ENCODE measurements at regions of chr1 and their contacts with region 1.

Region 1: GRCh38 chr1:151198255-151199127 is at the start of gene PIP5K1A:
- DNase-seq: peak; percentile 88 to 95
- H3K4me3 ChIP-seq: peak within 1 kb of the TSS; percentile 85
- H3K27ac ChIP-seq: peak within 1 kb of the TSS; percentile 93
- H3K4me1 ChIP-seq: peaks cover 38% of the 10 kb centered on the region
- H3K27me3 ChIP-seq: no peaks in the 10 kb centered on the region
- CTCF ChIP-seq: no peak
- total RNA-seq, gene PIP5K1A: 69.7 and 76.4 TPM in 2 replicates

Region 2: DNA sequence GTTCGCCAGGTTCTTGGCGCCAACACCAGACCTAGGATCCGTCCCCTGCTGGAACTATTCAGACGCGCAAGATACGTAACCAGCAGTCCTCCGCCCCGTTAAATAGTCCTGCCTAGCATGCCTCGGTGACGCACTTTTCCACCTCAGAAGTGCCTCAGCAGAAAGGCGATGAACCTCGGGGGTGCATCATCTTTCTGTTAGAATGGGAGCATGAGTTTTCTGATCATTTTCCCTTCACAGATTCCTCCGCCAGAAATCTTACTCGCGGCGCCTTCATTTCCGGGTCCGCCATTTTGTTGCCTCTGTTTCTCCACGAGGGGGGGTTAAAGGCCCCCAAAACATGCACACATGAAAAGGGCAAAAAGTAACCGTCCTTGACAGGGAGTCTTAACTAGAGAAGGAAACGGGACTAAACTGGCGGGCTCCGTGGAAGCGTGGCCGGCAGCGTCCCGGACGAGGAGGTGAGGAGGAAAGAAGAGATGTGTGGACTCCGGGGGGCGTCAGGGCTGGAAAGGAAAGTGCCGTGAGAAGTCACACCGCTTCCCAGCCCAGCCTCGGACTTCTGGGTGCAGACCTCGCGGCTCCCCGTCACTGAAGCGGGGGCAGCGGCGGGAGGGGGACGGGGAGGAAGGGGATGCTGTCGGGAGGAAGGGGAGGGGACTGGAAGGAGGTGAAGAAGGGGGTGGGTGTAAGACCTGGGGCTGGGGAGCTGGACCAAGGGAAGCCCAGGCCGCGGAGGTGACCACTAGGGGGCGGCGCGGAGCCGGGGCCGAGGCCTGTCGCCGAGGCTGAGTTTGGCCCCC is 127.8 kb before region 1 on chr1 and contains the start of gene GABPB2:
- CTCF ChIA-PET with region 1: interaction called, 10 read pairs
- POLR2A ChIA-PET with region 1: no interaction called
- intact Hi-C with region 1: no loop called
- DNase-seq: peak; percentile 78 to 85
- H3K4me3 ChIP-seq: peak within 1 kb of the TSS; percentile 84
- H3K27ac ChIP-seq: peak within 1 kb of the TSS; percentile 89
- H3K4me1 ChIP-seq: peaks cover 17% of the 10 kb centered on the region
- H3K27me3 ChIP-seq: no peaks in the 10 kb centered on the region
- CTCF ChIP-seq: peak; percentile 87
- total RNA-seq, gene GABPB2: 6.4 and 6.6 TPM in 2 replicates

Region 3: GRCh38 chr1:151281969-151282882 is 83.7 kb after region 1 on chr1 and contains the start of gene ZNF687:
- CTCF ChIA-PET with region 1: no interaction called
- POLR2A ChIA-PET with region 1: interaction called, 19 read pairs
- intact Hi-C with region 1: loop called (anchors 1 kb)
- DNase-seq: peak; percentile 99 to 100
- H3K4me3 ChIP-seq: peak within 1 kb of the TSS; percentile 62
- H3K27ac ChIP-seq: peak within 1 kb of the TSS; percentile 90
- H3K4me1 ChIP-seq: peaks cover 13% of the 10 kb centered on the region; the same call in 1 of the 2 replicates
- H3K27me3 ChIP-seq: no peaks in the 10 kb centered on the region
- CTCF ChIP-seq: no peak
- total RNA-seq, gene ZNF687: 26.6 and 28.7 TPM in 2 replicates

Region 4: DNA sequence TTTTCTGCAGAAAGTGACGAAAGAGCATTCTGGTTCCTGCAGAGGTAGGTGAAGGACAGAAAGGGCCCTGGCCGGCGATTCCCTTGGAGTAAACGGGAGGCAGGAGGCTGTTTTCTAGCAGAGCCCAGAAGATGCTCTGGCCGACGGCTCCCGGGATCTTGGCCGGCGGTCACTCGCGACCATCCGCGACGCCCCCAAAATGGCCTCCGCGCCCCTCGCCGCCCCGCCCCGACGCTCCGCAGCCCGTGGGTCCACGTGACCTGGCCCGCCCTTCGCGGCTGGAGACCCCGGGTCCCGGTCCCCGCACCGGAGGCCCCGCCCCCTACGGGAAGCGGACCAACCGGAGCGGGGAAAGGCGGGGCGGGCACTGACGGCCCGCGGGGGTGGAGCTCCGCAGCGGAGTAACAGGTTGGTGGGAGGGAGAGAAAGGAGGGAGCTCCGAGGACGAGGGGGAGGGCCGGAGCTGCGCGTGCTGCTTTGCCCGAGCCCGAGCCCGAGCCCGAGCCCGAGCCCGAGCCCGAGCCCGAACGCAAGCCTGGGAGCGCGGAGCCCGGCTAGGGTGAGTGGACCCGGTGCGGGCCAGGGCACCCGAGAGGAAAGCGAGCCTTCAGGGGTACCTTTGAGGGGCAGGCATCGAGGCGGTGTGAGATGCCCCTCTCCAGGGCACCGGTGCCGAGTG is 312.6 kb after region 1 on chr1 and contains the start of gene CGN:
- CTCF ChIA-PET with region 1: no interaction called
- POLR2A ChIA-PET with region 1: no interaction called
- intact Hi-C with region 1: loop called (anchors 5 kb)
- DNase-seq: peak; percentile 75 to 89
- H3K4me3 ChIP-seq: peak within 1 kb of the TSS; percentile 62
- H3K27ac ChIP-seq: peak within 1 kb of the TSS; percentile 96
- H3K4me1 ChIP-seq: peaks cover 57% of the 10 kb centered on the region
- H3K27me3 ChIP-seq: no peaks in the 10 kb centered on the region
- CTCF ChIP-seq: no peak
- total RNA-seq, gene CGN: 30.3 and 31.1 TPM in 2 replicates

Region 5: DNA sequence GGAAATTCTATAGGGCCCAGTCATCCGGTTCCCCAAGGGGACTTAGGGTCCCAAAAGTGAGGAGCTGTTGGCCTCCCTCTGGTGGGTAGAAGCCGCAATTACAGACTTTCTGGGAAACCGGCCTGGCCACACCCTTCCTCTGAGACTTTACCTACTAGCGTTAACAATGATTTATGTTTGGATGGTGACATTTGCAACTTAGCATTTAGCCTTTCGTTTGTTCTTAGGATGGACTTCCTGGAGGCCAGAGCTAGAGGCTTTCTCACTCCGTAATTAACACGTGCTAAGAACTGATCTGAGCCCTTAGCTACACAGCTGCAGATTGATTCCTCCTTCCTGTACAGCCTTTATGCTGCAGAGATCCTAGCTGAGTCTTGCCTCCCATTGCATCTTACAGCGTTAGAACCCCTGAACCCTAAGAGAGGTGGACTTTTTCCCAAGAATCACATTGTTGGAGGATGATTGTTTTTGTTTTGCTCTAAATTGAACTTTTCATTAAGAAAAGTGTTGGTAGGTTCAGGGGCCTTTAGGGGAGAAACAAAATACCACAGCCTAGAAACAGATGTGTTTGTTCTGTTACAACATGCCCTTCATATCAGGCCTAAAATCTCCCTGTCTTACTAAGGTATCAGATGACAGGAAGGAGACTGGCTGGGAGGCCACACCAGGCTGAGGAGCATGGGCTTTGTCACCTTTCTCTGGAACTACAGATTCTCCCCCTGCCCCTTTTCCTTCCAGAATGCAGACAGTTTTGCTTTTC is 836.3 kb after region 1 on chr1:
- CTCF ChIA-PET with region 1: no interaction called
- POLR2A ChIA-PET with region 1: interaction called, 4 read pairs
- intact Hi-C with region 1: loop called (anchors 10 kb)
- DNase-seq: peak; percentile 78 to 90
- H3K4me3 ChIP-seq: peak overlapping the region; percentile 89
- H3K27ac ChIP-seq: peak overlapping the region; percentile 97
- H3K4me1 ChIP-seq: peaks cover 66% of the 10 kb centered on the region
- H3K27me3 ChIP-seq: no peaks in the 10 kb centered on the region
- CTCF ChIP-seq: peak; percentile 94

Measured in PC-9 (cell line).